Activated CD4-positive, alpha-beta memory T cell treated with anti-CD3 and anti-CD28 coated beads for 36 hours (primary cell): ENCODE measurements at regions of chr10 and their contacts with region 1.

Region 1: GRCh38 chr10:329361-330099 is 194.3 kb downstream of the ZMYND11 start:
- DNase-seq: peak; percentile 61
- H3K4me3 Mint-ChIP-seq: peak overlapping the region; percentile 33
- H3K27ac Mint-ChIP-seq: peak overlapping the region; percentile 60
- H3K4me1 Mint-ChIP-seq: peaks cover 35% of the 10 kb centered on the region
- H3K27me3 Mint-ChIP-seq: no peaks in the 10 kb centered on the region

Region 2: DNA sequence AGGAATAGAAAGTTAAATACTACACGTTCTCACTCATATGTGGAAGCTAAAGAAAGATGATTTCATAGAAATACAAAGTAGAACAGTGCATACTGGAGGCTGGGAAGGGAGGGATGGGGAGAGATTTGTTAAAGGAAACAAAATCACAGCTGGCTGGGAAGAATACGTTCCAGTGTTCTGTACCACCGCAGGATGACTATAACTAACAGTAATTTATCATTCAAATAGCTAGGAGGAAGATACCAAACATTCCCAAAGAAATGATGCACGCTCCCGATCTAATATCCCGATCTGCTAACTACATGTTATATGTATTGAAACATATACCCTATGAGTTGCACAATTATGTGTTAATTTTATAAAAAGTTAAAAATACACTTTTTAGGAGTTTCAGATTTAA is 32.0 kb before region 1 on chr10:
- CTCF ChIA-PET with region 1: no interaction called
- POLR2A ChIA-PET with region 1: no interaction called
- intact Hi-C with region 1: no loop called
- DNase-seq: no peak
- H3K4me3 Mint-ChIP-seq: no peak overlapping the region
- H3K27ac Mint-ChIP-seq: no peak overlapping the region
- H3K4me1 Mint-ChIP-seq: no peaks in the 10 kb centered on the region
- H3K27me3 Mint-ChIP-seq: no peaks in the 10 kb centered on the region

Region 3: DNA sequence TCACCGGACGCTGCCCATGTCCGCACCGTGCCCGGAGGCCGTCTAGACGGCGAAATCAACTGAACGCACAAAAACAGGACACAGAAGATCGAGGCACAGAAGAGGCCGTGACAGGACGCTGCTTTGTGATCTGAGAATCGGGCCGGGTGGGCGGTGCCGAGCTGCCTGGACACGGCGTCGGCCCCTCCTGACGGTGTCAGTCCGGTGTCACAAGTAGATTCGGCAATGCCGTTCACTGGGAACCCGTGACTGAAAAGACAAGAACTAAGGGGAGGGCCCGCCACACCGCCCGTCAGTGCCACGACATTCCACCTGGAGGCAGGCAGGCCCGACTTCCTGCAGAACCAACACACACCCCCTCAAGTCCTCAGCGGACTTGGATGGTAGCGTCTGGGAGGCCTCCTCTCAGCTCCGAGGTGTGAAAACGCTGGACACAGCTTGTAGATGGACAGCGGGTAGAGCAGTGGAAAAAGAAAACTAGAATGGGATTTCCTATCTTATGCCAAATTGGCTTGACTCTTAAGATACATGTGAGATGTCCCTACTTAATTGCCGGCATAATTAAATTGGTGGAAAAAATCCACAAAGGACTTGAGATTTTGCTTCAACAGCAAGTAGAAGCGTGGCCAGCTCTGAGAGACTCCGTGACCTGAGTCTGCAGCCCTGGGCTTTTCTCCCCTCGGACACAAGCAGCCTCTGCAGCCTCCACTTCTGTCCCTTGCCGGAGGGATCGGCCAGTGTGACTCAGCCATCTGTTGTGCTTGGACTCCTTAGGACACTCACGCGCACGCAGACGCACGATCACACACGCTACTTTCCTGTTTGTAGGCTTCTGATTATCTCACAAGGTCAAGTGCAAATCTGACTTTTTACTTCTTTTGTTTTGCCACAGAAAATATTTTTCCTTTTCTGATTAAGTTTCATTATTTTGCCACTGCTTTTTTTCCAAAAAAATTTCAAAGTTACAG is 90.9 kb after region 1 on chr10:
- CTCF ChIA-PET with region 1: no interaction called
- POLR2A ChIA-PET with region 1: no interaction called
- intact Hi-C with region 1: no loop called
- DNase-seq: no peak
- H3K4me3 Mint-ChIP-seq: no peak overlapping the region
- H3K27ac Mint-ChIP-seq: no peak overlapping the region
- H3K4me1 Mint-ChIP-seq: no peaks in the 10 kb centered on the region
- H3K27me3 Mint-ChIP-seq: peaks cover 2% of the 10 kb centered on the region

Region 4: GRCh38 chr10:451021-451471 is 121.5 kb after region 1 on chr10:
- CTCF ChIA-PET with region 1: no interaction called
- POLR2A ChIA-PET with region 1: no interaction called
- intact Hi-C with region 1: loop called (anchors 10 kb)
- DNase-seq: peak; percentile 81
- H3K4me3 Mint-ChIP-seq: peak overlapping the region; percentile 67
- H3K27ac Mint-ChIP-seq: peak overlapping the region; percentile 63
- H3K4me1 Mint-ChIP-seq: peaks cover 47% of the 10 kb centered on the region
- H3K27me3 Mint-ChIP-seq: no peaks in the 10 kb centered on the region